ENCODE measurements at regions of chr1 and their contacts with region 1.

Region 1: GRCh38 chr1:161045750-161046571 is at the start of gene USF1:
- DNase-seq: peak; percentile 96
- ATAC-seq: peak; percentile 98
- total RNA-seq, gene USF1: 33.7 TPM

Region 2: DNA sequence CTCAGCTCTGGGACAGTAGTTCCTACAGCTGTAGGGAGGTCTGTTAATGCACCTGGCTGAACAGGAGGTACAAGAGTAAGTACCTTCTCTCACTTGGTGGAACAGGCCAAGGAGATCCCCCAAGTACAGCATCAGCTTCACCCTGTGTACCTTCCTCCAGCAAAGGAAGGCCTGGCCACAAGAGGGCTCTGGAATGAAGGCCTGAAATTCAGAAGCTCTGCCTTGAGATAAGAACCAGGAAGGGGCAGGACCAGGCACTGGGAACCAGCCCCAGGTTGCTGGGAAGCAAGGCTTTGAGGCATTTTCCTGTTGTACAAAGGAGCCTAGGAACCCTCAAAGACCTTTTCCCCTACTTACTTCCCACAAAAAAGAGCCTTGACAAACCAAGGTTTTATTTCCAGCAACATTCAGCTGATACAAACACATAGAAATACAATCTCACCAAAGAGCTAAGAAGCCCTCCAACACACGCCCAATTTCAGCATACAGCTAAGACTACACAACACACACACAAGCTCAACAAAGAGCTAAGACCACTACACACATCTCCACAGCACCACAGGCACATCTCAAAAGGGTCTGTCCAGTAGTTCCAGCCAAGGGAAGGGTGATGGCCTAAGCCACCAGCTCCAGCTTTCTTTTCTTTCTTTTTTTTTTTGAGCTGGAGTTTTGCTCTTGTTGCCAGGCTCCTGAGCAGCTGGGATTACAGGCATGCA is 48.5 kb before region 1 on chr1:
- intact Hi-C with region 1: loop called (anchors 2 kb)
- DNase-seq: no peak
- ATAC-seq: peak; percentile 84

Region 3: DNA sequence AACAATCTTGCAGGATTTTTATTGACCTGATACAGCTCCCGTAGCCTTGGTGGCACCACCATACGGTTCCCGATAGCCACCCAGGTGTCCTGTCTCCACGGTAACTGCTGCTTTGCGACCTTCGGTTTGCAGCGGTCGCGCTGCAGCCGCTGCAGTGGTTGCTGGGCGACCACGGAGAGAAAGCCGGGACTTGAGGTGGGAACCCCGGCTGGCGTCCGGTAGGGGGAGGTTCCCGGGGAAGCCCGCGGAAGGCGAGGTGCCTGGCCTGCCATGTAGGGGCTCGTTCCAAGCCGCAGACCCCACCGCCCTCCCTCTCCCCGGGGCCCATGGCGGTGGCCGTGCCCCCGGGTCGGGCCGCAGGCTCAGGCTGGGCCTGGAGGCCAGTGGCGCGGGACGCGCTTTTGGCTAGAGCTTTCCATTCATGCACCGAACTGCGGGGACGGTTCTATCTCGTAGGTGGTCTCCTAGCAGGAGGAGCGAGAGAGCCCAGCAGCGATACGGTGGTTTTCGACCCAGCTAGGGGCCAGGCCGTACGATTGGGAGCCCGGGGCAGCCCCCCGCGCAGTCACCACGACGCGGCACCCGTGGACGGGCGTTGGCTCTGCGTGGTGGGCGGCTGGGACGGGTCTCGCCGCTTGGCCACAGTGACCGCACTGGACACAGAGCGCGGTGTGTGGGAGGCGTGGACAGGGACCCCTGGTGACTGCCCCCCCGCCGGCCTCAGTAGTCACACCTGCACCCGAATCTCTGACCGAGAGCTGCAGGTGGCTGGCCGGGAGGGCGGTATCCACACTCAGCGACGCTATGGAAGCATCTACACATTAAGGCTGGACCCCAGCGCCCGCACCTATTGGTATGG is 52.5 kb after region 1 on chr1 and contains the start of gene KLHDC9:
- intact Hi-C with region 1: loop called (anchors 1 kb)
- DNase-seq: peak; percentile 78
- ATAC-seq: peak; percentile 64
- total RNA-seq, gene KLHDC9: 6.5 TPM

Region 4: GRCh38 chr1:161117759-161118581 is 72.0 kb after region 1 on chr1 and contains the starts of genes NIT1 and PFDN2:
- intact Hi-C with region 1: loop called (anchors 5 kb)
- DNase-seq: peak; percentile 94
- ATAC-seq: peak; percentile 89
- total RNA-seq, gene NIT1: 36.5 TPM
- total RNA-seq, gene PFDN2: 62.8 TPM

Measured in Right ventricle myocardium inferior (tissue), 1 donor.